CD4-positive, alpha-beta T cell (primary cell): ENCODE measurements at regions of chr10 and their contacts with region 1.

Region 1: GRCh38 chr10:72763201-72763600 is 71.3 kb downstream of the MCU start:
- DNase-seq: no peak
- ATAC-seq: no peak
- H3K4me3 ChIP-seq: no peak overlapping the region
- H3K4me3 Mint-ChIP-seq: no peak overlapping the region
- H3K27ac ChIP-seq: no peak overlapping the region
- H3K27ac Mint-ChIP-seq: no peak overlapping the region
- H3K4me1 ChIP-seq: no peaks in the 10 kb centered on the region
- H3K4me1 Mint-ChIP-seq: peaks cover 4% of the 10 kb centered on the region
- H3K27me3 ChIP-seq: no peaks in the 10 kb centered on the region
- H3K27me3 Mint-ChIP-seq: no peaks in the 10 kb centered on the region
- CTCF ChIP-seq: no peak

Region 2: DNA sequence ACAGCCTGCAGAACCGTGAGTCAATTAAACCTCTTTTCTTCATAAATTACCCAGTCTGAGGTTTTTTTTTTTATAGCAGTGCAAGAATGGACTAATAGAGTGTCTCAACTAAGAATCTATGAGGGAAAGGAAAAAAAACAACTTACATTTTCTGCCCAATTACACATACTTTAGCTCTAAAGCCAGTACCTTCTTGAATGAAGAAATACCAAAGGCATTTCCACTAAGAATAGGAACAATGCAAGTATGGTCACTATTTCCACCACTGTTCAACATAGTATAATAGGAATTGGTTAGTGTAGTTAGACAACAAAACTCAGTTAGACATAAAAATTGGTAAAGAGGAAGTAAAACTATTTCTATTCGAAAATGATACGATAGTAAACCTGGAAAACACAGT is 174.9 kb before region 1 on chr10:
- CTCF ChIA-PET with region 1: no interaction called
- POLR2A ChIA-PET with region 1: no interaction called
- intact Hi-C with region 1: no loop called
- DNase-seq: no peak
- ATAC-seq: no peak
- H3K4me3 ChIP-seq: no peak overlapping the region
- H3K4me3 Mint-ChIP-seq: no peak overlapping the region
- H3K27ac ChIP-seq: no peak overlapping the region
- H3K27ac Mint-ChIP-seq: no peak overlapping the region
- H3K4me1 ChIP-seq: no peaks in the 10 kb centered on the region
- H3K4me1 Mint-ChIP-seq: peaks cover 28% of the 10 kb centered on the region
- H3K27me3 ChIP-seq: no peaks in the 10 kb centered on the region
- H3K27me3 Mint-ChIP-seq: no peaks in the 10 kb centered on the region
- CTCF ChIP-seq: no peak

Region 3: DNA sequence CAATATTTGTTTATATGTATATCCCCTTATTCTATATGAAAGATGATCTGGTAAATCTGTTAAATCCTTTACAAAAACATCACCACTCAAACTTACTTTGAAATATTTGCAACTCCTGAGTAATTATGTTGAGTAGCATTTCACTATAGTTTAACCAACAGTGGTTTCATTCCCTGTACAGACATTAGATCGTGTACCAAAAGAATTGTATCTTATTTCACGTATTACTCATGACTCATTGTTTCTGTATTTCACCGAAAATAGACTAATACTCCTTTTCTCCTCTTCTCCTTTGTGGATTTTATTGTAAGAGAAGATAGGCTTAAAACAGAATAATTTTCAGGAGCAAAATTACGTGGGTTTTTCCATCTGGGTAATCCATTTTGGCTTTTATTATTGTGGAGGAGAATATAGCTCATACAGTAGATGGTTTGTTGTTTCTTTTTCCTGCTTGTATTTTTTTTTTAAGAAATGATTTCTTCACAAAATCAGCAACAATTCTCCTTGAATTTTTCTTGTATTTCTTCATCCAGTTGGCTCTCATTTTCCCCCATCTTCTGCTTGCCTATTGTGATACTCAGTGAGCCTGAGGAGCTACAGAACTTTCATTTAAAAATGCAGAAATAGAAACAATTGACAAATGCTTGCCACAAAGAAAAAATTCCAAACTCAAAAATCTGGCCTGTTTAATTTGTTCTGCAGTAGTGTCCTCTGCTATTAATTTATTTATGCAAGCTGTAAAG is 39.7 kb after region 1 on chr10:
- CTCF ChIA-PET with region 1: no interaction called
- POLR2A ChIA-PET with region 1: no interaction called
- intact Hi-C with region 1: loop called in 1 of 2 experiments (anchors 1 kb)
- DNase-seq: no peak
- ATAC-seq: no peak
- H3K4me3 ChIP-seq: no peak overlapping the region
- H3K4me3 Mint-ChIP-seq: no peak overlapping the region
- H3K27ac ChIP-seq: no peak overlapping the region
- H3K27ac Mint-ChIP-seq: no peak overlapping the region
- H3K4me1 ChIP-seq: peaks cover 7% of the 10 kb centered on the region
- H3K4me1 Mint-ChIP-seq: peaks cover 27% of the 10 kb centered on the region
- H3K27me3 ChIP-seq: no peaks in the 10 kb centered on the region
- H3K27me3 Mint-ChIP-seq: no peaks in the 10 kb centered on the region
- CTCF ChIP-seq: no peak